ENCODE measurements at regions of chr15 and their contacts with region 1.

Region 1: GRCh38 chr15:44426975-44427755 is at the start of gene CTDSPL2:
- DNase-seq: peak; percentile 87 to 96 (median 91)
- ATAC-seq: peak; percentile 95
- H3K4me3 ChIP-seq: peak within 1 kb of the TSS; percentile 72
- H3K4me3 Mint-ChIP-seq: peak within 1 kb of the TSS; percentile 99
- H3K27ac ChIP-seq: peak within 1 kb of the TSS; percentile 97 to 98
- H3K27ac Mint-ChIP-seq: peak within 1 kb of the TSS; percentile 99
- H3K4me1 ChIP-seq: peaks cover 24% of the 10 kb centered on the region
- H3K4me1 Mint-ChIP-seq: peaks cover 66% of the 10 kb centered on the region
- H3K27me3 ChIP-seq: no peaks in the 10 kb centered on the region
- H3K27me3 Mint-ChIP-seq: no peaks in the 10 kb centered on the region
- CTCF ChIP-seq: peak; percentile 24
- total RNA-seq, gene CTDSPL2: 106 to 113 TPM

Region 2: GRCh38 chr15:44195151-44195740 is 231.9 kb before region 1 on chr15 and contains the start of gene FRMD5:
- CTCF ChIA-PET with region 1: no interaction called
- POLR2A ChIA-PET with region 1: interaction called, 3 read pairs
- intact Hi-C with region 1: loop called in 1 of 2 experiments (anchors 5 kb)
- DNase-seq: peak; percentile 74 to 92 (median 85)
- ATAC-seq: peak; percentile 96
- H3K4me3 ChIP-seq: peak within 1 kb of the TSS; percentile 57
- H3K4me3 Mint-ChIP-seq: peak within 1 kb of the TSS; percentile 90
- H3K27ac ChIP-seq: no peak within 1 kb of the TSS
- H3K27ac Mint-ChIP-seq: peak within 1 kb of the TSS; percentile 22
- H3K4me1 ChIP-seq: peaks cover 21% of the 10 kb centered on the region
- H3K4me1 Mint-ChIP-seq: peaks cover 22% of the 10 kb centered on the region
- H3K27me3 ChIP-seq: peaks cover 26 to 45% of the 10 kb centered on the region in 2 experiments
- H3K27me3 Mint-ChIP-seq: peaks cover 86% of the 10 kb centered on the region
- CTCF ChIP-seq: no peak
- total RNA-seq, gene FRMD5: not detected

Region 3: DNA sequence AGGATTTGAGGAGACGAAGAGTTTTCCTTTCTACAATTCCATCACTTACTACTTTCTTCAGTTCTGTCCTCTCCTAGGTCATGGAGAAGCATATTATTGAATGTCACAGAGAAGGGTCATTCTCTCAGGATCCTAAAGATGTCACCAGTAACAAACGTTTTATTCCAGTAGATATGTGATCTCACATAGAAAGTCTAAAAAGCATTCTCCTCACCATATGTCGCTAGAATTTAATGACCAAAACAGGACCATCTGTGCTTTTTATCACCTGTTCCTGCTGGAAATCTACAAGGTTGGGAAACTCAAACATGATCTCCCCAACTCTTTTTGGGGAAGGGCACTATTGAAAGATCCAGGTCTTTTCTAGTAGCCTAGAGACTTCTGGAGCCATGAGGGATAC is 208.1 kb before region 1 on chr15:
- CTCF ChIA-PET with region 1: no interaction called
- POLR2A ChIA-PET with region 1: no interaction called
- intact Hi-C with region 1: no loop called
- DNase-seq: no peak
- ATAC-seq: no peak
- H3K4me3 ChIP-seq: no peak overlapping the region
- H3K4me3 Mint-ChIP-seq: no peak overlapping the region
- H3K27ac ChIP-seq: no peak overlapping the region
- H3K27ac Mint-ChIP-seq: no peak overlapping the region
- H3K4me1 ChIP-seq: no peaks in the 10 kb centered on the region
- H3K4me1 Mint-ChIP-seq: no peaks in the 10 kb centered on the region
- H3K27me3 ChIP-seq: peaks cover 0 to 2% of the 10 kb centered on the region in 2 experiments
- H3K27me3 Mint-ChIP-seq: peaks cover 26% of the 10 kb centered on the region
- CTCF ChIP-seq: no peak

Region 4: GRCh38 chr15:44443515-44443914 is 16.4 kb after region 1 on chr15:
- CTCF ChIA-PET with region 1: interaction called, 14 read pairs
- POLR2A ChIA-PET with region 1: interaction called, 5 read pairs
- intact Hi-C with region 1: no loop called
- DNase-seq: no peak
- ATAC-seq: no peak
- H3K4me3 ChIP-seq: no peak overlapping the region
- H3K4me3 Mint-ChIP-seq: no peak overlapping the region
- H3K27ac ChIP-seq: no peak overlapping the region
- H3K27ac Mint-ChIP-seq: no peak overlapping the region
- H3K4me1 ChIP-seq: peaks cover 18% of the 10 kb centered on the region
- H3K4me1 Mint-ChIP-seq: peaks cover 46% of the 10 kb centered on the region
- H3K27me3 ChIP-seq: no peaks in the 10 kb centered on the region
- H3K27me3 Mint-ChIP-seq: no peaks in the 10 kb centered on the region
- CTCF ChIP-seq: no peak

Region 5: DNA sequence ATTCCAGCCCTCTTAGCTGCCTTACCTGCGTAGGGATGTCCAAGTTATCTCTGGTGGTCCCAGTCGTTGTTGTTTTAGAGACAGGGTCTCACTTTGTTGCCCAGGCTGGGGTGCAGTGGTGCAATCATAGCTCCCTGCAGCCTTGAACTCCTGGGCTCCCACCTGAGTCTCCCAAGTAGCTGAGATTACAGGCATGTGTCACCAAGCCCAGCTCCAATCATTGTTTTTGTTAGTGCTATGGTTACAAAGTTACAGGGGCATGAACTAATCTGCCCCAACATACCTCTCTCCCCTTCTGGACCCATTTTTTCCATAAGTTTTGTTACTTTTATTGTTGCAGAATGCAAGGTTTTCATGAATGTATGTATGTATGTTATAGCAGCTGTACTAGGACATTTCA is 54.9 kb after region 1 on chr15:
- CTCF ChIA-PET with region 1: interaction called, 4 read pairs
- POLR2A ChIA-PET with region 1: interaction called, 4 read pairs
- intact Hi-C with region 1: loop called in 1 of 2 experiments (anchors 5 kb)
- DNase-seq: no peak
- ATAC-seq: no peak
- H3K4me3 ChIP-seq: no peak overlapping the region
- H3K4me3 Mint-ChIP-seq: no peak overlapping the region
- H3K27ac ChIP-seq: no peak overlapping the region
- H3K27ac Mint-ChIP-seq: peak overlapping the region; percentile 2
- H3K4me1 ChIP-seq: peaks cover 3% of the 10 kb centered on the region
- H3K4me1 Mint-ChIP-seq: peaks cover 25% of the 10 kb centered on the region
- H3K27me3 ChIP-seq: no peaks in the 10 kb centered on the region
- H3K27me3 Mint-ChIP-seq: no peaks in the 10 kb centered on the region
- CTCF ChIP-seq: no peak

Region 6: GRCh38 chr15:44516436-44516835 is 89.3 kb after region 1 on chr15:
- CTCF ChIA-PET with region 1: no interaction called
- POLR2A ChIA-PET with region 1: no interaction called
- intact Hi-C with region 1: no loop called
- DNase-seq: no peak
- ATAC-seq: no peak
- H3K4me3 ChIP-seq: no peak overlapping the region
- H3K4me3 Mint-ChIP-seq: no peak overlapping the region
- H3K27ac ChIP-seq: no peak overlapping the region
- H3K27ac Mint-ChIP-seq: no peak overlapping the region
- H3K4me1 ChIP-seq: no peaks in the 10 kb centered on the region
- H3K4me1 Mint-ChIP-seq: no peaks in the 10 kb centered on the region
- H3K27me3 ChIP-seq: no peaks in the 10 kb centered on the region
- H3K27me3 Mint-ChIP-seq: no peaks in the 10 kb centered on the region
- CTCF ChIP-seq: no peak

Region 7: DNA sequence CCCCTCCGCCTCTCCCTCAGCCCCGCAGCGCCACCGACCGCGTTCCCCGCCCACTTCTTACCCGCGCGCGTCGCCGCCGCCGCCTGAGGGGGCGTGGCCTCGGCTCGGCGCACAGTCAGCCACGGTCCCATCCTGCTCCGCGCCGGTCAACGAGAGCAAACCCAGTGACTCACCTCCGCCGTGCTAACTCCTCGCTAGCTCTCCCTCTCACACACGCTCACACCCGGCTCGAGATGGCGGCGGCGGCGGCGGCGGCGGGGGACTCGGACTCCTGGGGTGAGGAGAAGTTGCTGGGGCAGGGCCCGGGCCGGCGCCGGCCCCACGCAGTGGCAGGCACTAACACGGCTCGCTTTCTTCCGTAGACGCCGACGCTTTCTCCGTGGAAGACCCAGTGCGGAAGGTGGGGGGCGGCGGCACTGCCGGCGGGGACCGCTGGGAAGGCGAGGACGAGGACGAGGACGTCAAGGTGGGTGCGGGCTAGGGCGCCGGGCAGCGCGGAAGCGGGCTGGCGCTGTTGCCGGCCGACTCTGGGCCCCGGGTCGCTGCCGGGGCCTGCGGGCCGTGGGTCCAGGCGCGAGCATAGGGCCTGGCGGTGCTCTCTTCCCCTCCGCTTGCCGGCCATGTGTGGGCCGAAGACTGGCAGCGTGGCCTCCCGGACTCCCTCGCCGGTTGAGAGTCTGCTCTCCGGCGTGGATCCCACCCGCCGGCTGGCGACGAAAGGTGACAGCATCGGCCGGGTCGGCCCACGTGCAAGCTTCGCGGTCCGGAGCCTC is 110.0 kb after region 1 on chr15 and contains the start of gene EIF3J:
- CTCF ChIA-PET with region 1: interaction called, 4 read pairs
- POLR2A ChIA-PET with region 1: interaction called, 30 read pairs
- intact Hi-C with region 1: loop called (anchors 1 to 2 kb)
- DNase-seq: peak; percentile 86 to 99 (median 94)
- ATAC-seq: peak; percentile 89
- H3K4me3 ChIP-seq: peak within 1 kb of the TSS; percentile 68
- H3K4me3 Mint-ChIP-seq: peak within 1 kb of the TSS; percentile 92
- H3K27ac ChIP-seq: peak within 1 kb of the TSS; percentile 86 to 97
- H3K27ac Mint-ChIP-seq: peak within 1 kb of the TSS; percentile 91
- H3K4me1 ChIP-seq: peaks cover 42% of the 10 kb centered on the region
- H3K4me1 Mint-ChIP-seq: peaks cover 59% of the 10 kb centered on the region
- H3K27me3 ChIP-seq: no peaks in the 10 kb centered on the region
- H3K27me3 Mint-ChIP-seq: no peaks in the 10 kb centered on the region
- CTCF ChIP-seq: no peak
- total RNA-seq, gene EIF3J: 67.6 to 69.2 TPM